ENCODE measurements at regions of chr16 and their contacts with region 1.

Region 1: DNA sequence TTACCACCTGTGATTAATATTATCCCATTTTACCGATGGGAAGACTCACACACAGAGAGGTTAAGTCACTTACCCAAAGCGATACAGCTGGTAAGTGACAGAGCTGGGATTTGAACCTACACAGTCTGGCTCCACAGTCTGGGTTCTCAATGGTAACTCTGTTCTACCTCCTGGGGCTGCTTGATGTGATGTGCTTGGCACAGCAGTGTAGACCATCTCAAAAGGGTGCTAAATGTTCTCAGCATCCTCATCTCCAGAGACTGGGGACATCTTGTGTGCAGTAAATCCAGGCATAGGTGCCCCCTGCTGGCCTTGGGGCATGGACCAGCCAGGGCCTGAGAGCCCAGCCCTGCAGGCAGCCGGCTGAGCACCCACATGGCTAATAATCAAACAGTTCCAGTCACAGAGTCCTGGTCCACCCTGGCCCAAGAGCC is 15.4 kb upstream of the KATNB1 start:
- DNase-seq: peak; percentile 18
- H3K4me3 ChIP-seq: no peak overlapping the region
- H3K27ac ChIP-seq: no peak overlapping the region
- H3K4me1 ChIP-seq: no peaks in the 10 kb centered on the region
- CTCF ChIP-seq: peak; percentile 53

Region 2: GRCh38 chr16:57576429-57576870 is 143.7 kb before region 1 on chr16:
- CTCF ChIA-PET with region 1: no interaction called
- POLR2A ChIA-PET with region 1: no interaction called
- intact Hi-C with region 1: loop called (anchors 5 kb)
- DNase-seq: peak; percentile 80
- H3K4me3 ChIP-seq: no peak overlapping the region
- H3K27ac ChIP-seq: no peak overlapping the region
- H3K4me1 ChIP-seq: no peaks in the 10 kb centered on the region
- CTCF ChIP-seq: peak; percentile 90

Region 3: GRCh38 chr16:57600048-57600835 is 119.9 kb before region 1 on chr16:
- CTCF ChIA-PET with region 1: no interaction called
- POLR2A ChIA-PET with region 1: no interaction called
- intact Hi-C with region 1: loop called (anchors 5 kb)
- DNase-seq: peak; percentile 47
- H3K4me3 ChIP-seq: no peak overlapping the region
- H3K27ac ChIP-seq: no peak overlapping the region
- H3K4me1 ChIP-seq: no peaks in the 10 kb centered on the region
- CTCF ChIP-seq: peak; percentile 81

Measured in OCI-LY7 (cell line).